Tibial artery (tissue), 4 donors: ENCODE measurements at regions of chr9 and their contacts with region 1.

Region 1: DNA sequence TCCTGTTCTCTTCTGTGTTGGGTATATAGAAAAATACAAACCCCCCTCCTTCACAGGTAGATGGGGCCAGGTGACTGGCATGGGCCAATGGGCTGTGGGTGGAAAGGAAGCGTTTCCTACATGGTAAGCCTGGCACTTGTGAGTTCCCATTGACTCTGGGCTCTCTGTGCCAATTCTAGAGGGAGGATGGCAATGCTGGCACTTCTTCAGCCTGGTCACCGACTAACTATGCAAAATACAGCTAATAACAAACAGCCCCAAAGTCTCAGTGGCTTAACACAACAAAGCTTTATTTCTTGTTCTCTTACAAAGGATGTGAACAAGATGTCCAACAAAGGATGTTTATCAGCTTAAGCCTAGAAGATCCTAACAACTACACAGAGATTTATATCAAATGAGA is 258.1 kb downstream of the SYK start:
- DNase-seq: no peak
- H3K4me3 ChIP-seq: no peak overlapping the region
- H3K27ac ChIP-seq: peak overlapping the region in 1 of 2 donors; percentile 51
- H3K4me1 ChIP-seq: peaks cover 0 to 23% (median 1%) of the 10 kb centered on the region in 4 donors
- H3K27me3 ChIP-seq: no peaks in the 10 kb centered on the region
- CTCF ChIP-seq: no peak

Region 2: DNA sequence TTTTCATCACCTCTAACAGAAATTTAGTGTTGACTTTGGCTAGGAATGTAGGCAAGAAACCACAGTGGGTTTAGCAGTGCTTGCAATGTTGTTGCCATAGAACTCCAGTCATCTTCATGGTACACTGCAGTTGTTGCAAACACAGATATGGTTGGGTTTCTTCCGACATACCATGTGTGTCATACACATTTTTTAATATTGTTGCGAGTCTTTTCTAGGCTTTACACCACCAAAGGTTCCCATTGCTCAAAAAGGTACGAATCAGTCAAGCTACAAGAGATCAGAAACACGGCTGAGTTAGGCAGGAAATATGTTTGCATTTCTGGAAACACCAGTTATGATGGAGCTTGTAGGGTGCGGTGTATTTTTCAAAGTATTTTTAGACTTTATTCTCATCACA is 85.7 kb before region 1 on chr9:
- intact Hi-C with region 1: no loop called
- DNase-seq: no peak
- H3K4me3 ChIP-seq: no peak overlapping the region
- H3K27ac ChIP-seq: no peak overlapping the region
- H3K4me1 ChIP-seq: peaks cover 0 to 16% (median 3%) of the 10 kb centered on the region in 4 donors
- H3K27me3 ChIP-seq: no peaks in the 10 kb centered on the region
- CTCF ChIP-seq: no peak

Region 3: GRCh38 chr9:91253488-91253887 is 193.8 kb after region 1 on chr9:
- intact Hi-C with region 1: no loop called
- DNase-seq: no peak
- H3K4me3 ChIP-seq: no peak overlapping the region
- H3K27ac ChIP-seq: no peak overlapping the region
- H3K4me1 ChIP-seq: peaks cover 0 to 4% (median 0%) of the 10 kb centered on the region in 4 donors
- H3K27me3 ChIP-seq: no peaks in the 10 kb centered on the region
- CTCF ChIP-seq: no peak

Region 4: DNA sequence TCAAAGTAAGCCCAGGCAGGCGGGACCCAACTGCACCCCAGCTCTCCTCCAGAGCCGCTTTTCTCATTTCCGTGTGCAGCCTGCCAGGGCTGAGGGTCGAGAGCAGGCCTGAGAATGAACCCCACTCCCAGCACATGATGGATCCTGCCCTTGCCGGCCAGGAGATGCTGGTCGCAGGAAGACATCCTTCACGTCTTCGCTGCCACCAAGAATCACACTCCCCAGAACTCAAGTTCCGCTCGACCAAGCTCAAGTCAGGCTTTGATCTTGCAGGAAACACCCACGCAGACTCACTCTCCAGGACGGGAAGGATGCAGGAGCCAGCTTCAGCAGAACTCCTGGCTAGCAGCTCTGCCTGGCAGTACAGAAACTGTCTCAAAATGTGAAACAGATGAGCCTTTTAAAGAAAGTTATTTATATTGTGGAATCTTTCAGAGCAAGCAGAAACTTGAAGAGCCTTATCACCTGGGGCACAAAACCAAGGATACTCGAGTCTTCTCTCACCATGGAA is 787.9 kb after region 1 on chr9:
- intact Hi-C with region 1: loop called (anchors 10 kb)
- DNase-seq: no peak
- H3K4me3 ChIP-seq: no peak overlapping the region
- H3K27ac ChIP-seq: no peak overlapping the region
- H3K4me1 ChIP-seq: peaks cover 0 to 18% (median 13%) of the 10 kb centered on the region in 4 donors
- H3K27me3 ChIP-seq: no peaks in the 10 kb centered on the region
- CTCF ChIP-seq: no peak